ENCODE measurements at regions of chr5 and their contacts with region 1.

Region 1: GRCh38 chr5:109468737-109469420 is 59.1 kb upstream of the PJA2 start:
- DNase-seq: peak; percentile 65
- CTCF ChIP-seq: peak; percentile 61

Region 2: GRCh38 chr5:108919591-108920326 is 549.1 kb before region 1 on chr5:
- in situ Hi-C with region 1: loop called (anchors 25 kb)
- DNase-seq: peak; percentile 32
- CTCF ChIP-seq: no peak

Measured in GM13976 (cell line).